ENCODE measurements at regions of chr7 and their contacts with region 1.

Region 1: DNA sequence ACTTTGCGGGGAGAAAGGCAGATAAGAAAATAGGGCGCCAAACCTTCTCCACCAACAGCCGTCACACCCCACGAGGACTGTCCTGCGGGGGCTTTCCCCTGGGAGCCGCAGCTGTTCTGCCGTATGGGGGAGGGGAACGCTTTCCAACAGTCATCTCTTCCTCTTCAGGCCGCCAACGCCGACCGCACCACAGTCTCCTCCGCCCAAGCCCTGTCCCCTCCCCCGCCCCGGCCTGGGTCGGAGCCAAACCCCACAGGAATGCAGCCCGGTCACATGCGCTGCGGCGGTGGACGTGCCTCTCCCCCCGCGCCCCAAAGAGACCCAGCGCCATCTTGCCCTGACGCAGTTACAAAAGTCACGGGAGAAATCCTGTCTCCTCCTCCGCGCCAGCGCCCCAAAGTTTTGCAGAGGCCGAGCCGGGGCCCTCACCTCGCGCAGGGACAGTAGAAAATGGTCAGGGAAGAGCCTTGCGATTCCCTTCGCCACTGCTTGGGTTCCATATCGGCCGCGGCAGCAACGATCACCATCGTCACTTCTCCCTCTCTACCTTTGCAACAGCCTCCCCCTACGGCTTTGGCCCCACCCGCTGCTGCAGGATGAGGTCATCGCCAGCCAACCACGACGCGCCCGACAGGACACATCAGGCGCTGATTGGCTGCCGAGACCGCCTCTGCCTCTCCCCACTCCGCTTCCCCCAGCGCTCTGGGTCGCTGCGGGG is 1.3 kb upstream of the KMT2E start:
- DNase-seq: peak; percentile 99 to 100 (median 100)
- ATAC-seq: peak; percentile 93
- H3K4me3 ChIP-seq: peak overlapping the region; percentile 73
- H3K27ac ChIP-seq: peak overlapping the region; percentile 100
- H3K4me1 ChIP-seq: peaks cover 3% of the 10 kb centered on the region
- H3K27me3 ChIP-seq: no peaks in the 10 kb centered on the region

Region 2: GRCh38 chr7:103981003-103981423 is 1031.6 kb before region 1 on chr7:
- intact Hi-C with region 1: no loop called
- DNase-seq: no peak
- ATAC-seq: no peak
- H3K4me3 ChIP-seq: no peak overlapping the region
- H3K27ac ChIP-seq: no peak overlapping the region
- H3K4me1 ChIP-seq: no peaks in the 10 kb centered on the region
- H3K27me3 ChIP-seq: no peaks in the 10 kb centered on the region

Region 3: GRCh38 chr7:104914421-104914820 is 98.2 kb before region 1 on chr7:
- intact Hi-C with region 1: no loop called
- DNase-seq: no peak
- ATAC-seq: no peak
- H3K4me3 ChIP-seq: no peak overlapping the region
- H3K27ac ChIP-seq: no peak overlapping the region
- H3K4me1 ChIP-seq: no peaks in the 10 kb centered on the region
- H3K27me3 ChIP-seq: no peaks in the 10 kb centered on the region

Region 4: GRCh38 chr7:104983578-104984539 is 28.8 kb before region 1 on chr7:
- intact Hi-C with region 1: loop called in 1 of 4 experiments (anchors 1 kb)
- DNase-seq: peak; percentile 92 to 96 (median 95)
- ATAC-seq: peak; percentile 95 to 96
- H3K4me3 ChIP-seq: peak overlapping the region; percentile 82
- H3K27ac ChIP-seq: peak overlapping the region; percentile 99
- H3K4me1 ChIP-seq: peaks cover 8% of the 10 kb centered on the region
- H3K27me3 ChIP-seq: no peaks in the 10 kb centered on the region

Region 5: GRCh38 chr7:105187302-105188169 is 174.9 kb after region 1 on chr7:
- intact Hi-C with region 1: no loop called
- DNase-seq: no peak
- ATAC-seq: no peak
- H3K4me3 ChIP-seq: no peak overlapping the region
- H3K27ac ChIP-seq: no peak overlapping the region
- H3K4me1 ChIP-seq: peaks cover 3% of the 10 kb centered on the region
- H3K27me3 ChIP-seq: no peaks in the 10 kb centered on the region

Region 6: GRCh38 chr7:105202616-105203015 is 190.0 kb after region 1 on chr7:
- intact Hi-C with region 1: no loop called
- DNase-seq: no peak
- ATAC-seq: no peak
- H3K4me3 ChIP-seq: no peak overlapping the region
- H3K27ac ChIP-seq: no peak overlapping the region
- H3K4me1 ChIP-seq: peaks cover 4% of the 10 kb centered on the region
- H3K27me3 ChIP-seq: no peaks in the 10 kb centered on the region